ENCODE measurements at regions of chr4 and their contacts with region 1.

Region 1: GRCh38 chr4:2811830-2812611 is 19.1 kb downstream of the SH3BP2 start:
- DNase-seq: peak; percentile 88
- H3K4me3 ChIP-seq: peak overlapping the region; percentile 67
- H3K27ac ChIP-seq: peak overlapping the region; percentile 48
- H3K4me1 ChIP-seq: peaks cover 33% of the 10 kb centered on the region
- CTCF ChIP-seq: no peak

Region 2: GRCh38 chr4:2484993-2485392 is 327.0 kb before region 1 on chr4:
- CTCF ChIA-PET with region 1: no interaction called
- POLR2A ChIA-PET with region 1: no interaction called
- intact Hi-C with region 1: no loop called
- DNase-seq: peak; percentile 91
- H3K4me3 ChIP-seq: peak overlapping the region; percentile 50
- H3K27ac ChIP-seq: peak overlapping the region; percentile 81
- H3K4me1 ChIP-seq: peaks cover 64% of the 10 kb centered on the region
- CTCF ChIP-seq: no peak

Region 3: DNA sequence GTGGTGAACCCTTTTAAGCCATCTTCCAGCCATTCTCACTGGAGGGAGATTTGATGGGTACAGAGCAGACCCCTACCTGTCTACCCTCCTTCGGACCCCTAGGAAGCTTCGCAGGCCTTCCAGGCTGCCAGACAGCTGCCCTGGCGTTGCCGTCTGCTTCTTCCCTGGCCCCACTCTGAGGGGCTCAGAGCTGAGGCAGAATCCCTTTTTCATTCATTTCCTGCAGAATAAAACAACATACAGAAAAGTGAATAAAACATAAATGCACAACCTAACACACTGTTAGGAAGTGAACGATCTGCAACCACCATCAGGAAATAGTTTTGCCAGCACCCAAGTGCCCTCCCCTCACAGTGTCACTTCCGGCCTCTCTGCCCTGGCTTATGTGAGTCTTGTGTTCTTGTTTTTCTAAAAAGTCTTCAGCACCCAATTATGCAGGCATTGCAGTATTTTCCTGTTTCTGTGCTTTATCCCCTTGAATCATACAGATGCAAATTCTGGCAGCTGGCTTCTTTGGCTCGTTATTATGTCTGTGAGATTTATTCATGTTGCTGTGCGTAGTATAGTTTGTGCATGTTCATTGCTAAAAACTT is 26.0 kb after region 1 on chr4:
- CTCF ChIA-PET with region 1: no interaction called
- POLR2A ChIA-PET with region 1: interaction called, 4 read pairs
- intact Hi-C with region 1: loop called (anchors 1 kb)
- DNase-seq: peak; percentile 82
- H3K4me3 ChIP-seq: peak overlapping the region; percentile 56
- H3K27ac ChIP-seq: peak overlapping the region; percentile 70
- H3K4me1 ChIP-seq: peaks cover 54% of the 10 kb centered on the region
- CTCF ChIP-seq: no peak